Mammary epithelial cell (primary cell): ENCODE measurements at regions of chr17 and their contacts with region 1.

Region 1: DNA sequence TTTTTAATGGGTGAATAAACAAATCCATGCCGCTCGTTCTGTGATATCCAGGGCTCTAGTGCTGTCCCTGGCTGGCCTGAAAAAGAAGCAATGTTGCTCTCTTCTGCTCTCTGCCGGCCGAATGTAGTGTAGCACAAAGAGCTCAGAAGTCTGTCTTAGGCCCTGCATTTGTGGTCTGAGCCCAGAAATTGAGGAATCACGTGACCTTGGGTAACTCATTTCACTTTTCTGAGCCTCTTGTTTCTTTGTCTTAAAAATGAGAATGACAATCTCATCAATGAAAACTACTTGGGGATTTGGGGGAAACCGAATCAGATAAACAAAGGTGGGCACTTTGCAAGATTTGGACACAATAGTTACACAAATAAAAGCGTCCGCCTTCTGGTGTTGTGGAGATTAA is 381.6 kb upstream of the ASIC2 start:
- DNase-seq: peak; percentile 46
- H3K4me3 ChIP-seq: no peak overlapping the region
- H3K27ac ChIP-seq: no peak overlapping the region
- H3K4me1 ChIP-seq: no peaks in the 10 kb centered on the region
- H3K27me3 ChIP-seq: no peaks in the 10 kb centered on the region
- CTCF ChIP-seq: peak; percentile 69 to 78

Region 2: GRCh38 chr17:33016920-33017319 is 657.8 kb before region 1 on chr17:
- CTCF ChIA-PET with region 1: no interaction called
- dilution Hi-C with region 1: no loop called
- in situ Hi-C with region 1: no loop called
- intact Hi-C with region 1: loop called (anchors 1 kb)
- DNase-seq: peak; percentile 54
- H3K4me3 ChIP-seq: no peak overlapping the region
- H3K27ac ChIP-seq: no peak overlapping the region
- H3K4me1 ChIP-seq: peaks cover 45% of the 10 kb centered on the region
- H3K27me3 ChIP-seq: no peaks in the 10 kb centered on the region
- CTCF ChIP-seq: peak in 1 of 2 donors; percentile 36

Region 3: DNA sequence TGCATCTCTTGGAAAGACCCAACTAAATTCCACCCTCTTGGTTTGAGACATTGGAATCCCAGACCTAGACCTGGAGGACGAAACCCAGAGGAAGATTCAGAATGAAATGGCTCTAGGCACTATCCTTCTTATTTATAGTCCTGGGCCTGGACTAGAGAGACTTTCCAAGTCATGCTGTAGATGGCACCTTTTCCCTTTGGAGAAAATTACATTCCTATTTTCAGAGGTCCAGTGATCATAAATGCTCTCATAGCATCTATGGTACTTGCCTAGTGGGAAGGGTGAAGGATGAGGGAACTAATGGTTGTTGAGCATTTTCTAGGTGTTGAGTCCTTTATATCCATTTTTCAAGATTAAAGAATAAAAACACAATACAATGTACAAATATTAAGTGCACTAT is 645.9 kb before region 1 on chr17:
- CTCF ChIA-PET with region 1: no interaction called
- dilution Hi-C with region 1: no loop called
- in situ Hi-C with region 1: loop called in 1 of 2 experiments (anchors 10 kb)
- intact Hi-C with region 1: loop called (anchors 1 kb)
- DNase-seq: no peak
- H3K4me3 ChIP-seq: no peak overlapping the region
- H3K27ac ChIP-seq: no peak overlapping the region
- H3K4me1 ChIP-seq: no peaks in the 10 kb centered on the region
- H3K27me3 ChIP-seq: no peaks in the 10 kb centered on the region
- CTCF ChIP-seq: peak in 1 of 2 donors; percentile 39

Region 4: GRCh38 chr17:33292184-33292980 is 382.3 kb before region 1 on chr17:
- CTCF ChIA-PET with region 1: no interaction called
- dilution Hi-C with region 1: no loop called
- in situ Hi-C with region 1: no loop called
- intact Hi-C with region 1: loop called (anchors 5 kb)
- DNase-seq: peak; percentile 50
- H3K4me3 ChIP-seq: peak overlapping the region; percentile 36 to 52 (median 36)
- H3K27ac ChIP-seq: no peak overlapping the region
- H3K4me1 ChIP-seq: peaks cover 18% of the 10 kb centered on the region
- H3K27me3 ChIP-seq: peaks cover 3% of the 10 kb centered on the region
- CTCF ChIP-seq: peak; percentile 9 to 43

Region 5: GRCh38 chr17:33712120-33712519 is 37.4 kb after region 1 on chr17:
- CTCF ChIA-PET with region 1: no interaction called
- dilution Hi-C with region 1: no loop called
- in situ Hi-C with region 1: no loop called
- intact Hi-C with region 1: no loop called
- DNase-seq: no peak
- H3K4me3 ChIP-seq: no peak overlapping the region
- H3K27ac ChIP-seq: no peak overlapping the region
- H3K4me1 ChIP-seq: no peaks in the 10 kb centered on the region
- H3K27me3 ChIP-seq: no peaks in the 10 kb centered on the region
- CTCF ChIP-seq: no peak

Region 6: DNA sequence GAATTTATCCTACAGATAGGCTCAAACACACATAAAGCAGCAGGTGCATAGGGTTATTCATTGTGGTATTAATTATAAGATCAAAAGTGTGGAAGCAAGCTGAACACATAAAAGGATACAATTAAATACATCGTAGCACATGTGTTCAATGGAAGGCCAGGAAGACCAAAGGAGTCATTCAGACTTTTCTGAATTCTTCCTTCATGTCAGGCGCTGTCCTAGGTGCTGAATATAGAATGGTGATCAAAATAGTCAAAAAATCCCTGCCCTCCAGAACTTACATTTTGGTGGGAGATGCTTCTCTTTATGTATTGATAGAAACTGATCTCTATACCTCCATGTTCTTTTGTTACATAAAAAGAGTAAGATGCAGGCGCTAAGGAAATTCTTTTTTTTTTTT is 57.4 kb after region 1 on chr17:
- CTCF ChIA-PET with region 1: no interaction called
- dilution Hi-C with region 1: no loop called
- in situ Hi-C with region 1: no loop called
- intact Hi-C with region 1: no loop called
- DNase-seq: no peak
- H3K4me3 ChIP-seq: no peak overlapping the region
- H3K27ac ChIP-seq: no peak overlapping the region
- H3K4me1 ChIP-seq: no peaks in the 10 kb centered on the region
- H3K27me3 ChIP-seq: no peaks in the 10 kb centered on the region
- CTCF ChIP-seq: no peak

Region 7: DNA sequence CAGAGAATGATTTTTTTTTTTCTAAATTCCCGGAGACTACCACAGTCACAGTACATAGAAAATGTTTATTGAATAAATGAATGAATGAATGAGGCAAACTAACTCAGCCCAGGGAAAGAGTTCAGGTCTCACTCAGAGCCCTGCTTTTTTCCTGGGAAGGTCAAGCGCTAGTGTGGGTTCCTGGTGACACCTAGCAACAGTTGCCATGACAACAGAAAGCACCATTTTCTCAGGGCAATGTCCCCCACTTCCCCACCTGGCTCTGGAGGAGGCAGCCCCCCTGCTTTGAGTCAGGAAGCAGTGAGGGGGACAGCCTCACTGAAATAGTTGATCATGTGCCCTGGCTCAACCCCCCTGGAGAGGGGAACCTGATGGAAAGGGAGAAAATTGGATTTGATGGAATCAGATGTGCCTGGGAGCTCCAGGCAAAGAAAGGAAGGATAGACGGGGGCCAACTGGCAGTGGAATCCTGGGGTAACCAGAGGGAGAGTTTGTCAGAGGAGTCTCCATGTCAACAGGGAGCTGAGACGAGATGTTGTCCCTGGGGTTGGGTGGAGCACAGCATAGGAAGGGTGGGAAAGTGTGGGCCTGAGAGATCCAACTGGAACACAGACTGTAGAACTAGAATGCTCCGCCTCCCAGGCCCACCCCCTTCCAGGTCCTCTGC is 338.2 kb after region 1 on chr17:
- CTCF ChIA-PET with region 1: no interaction called
- dilution Hi-C with region 1: no loop called
- in situ Hi-C with region 1: no loop called
- intact Hi-C with region 1: no loop called
- DNase-seq: no peak
- H3K4me3 ChIP-seq: no peak overlapping the region
- H3K27ac ChIP-seq: no peak overlapping the region
- H3K4me1 ChIP-seq: no peaks in the 10 kb centered on the region
- H3K27me3 ChIP-seq: no peaks in the 10 kb centered on the region
- CTCF ChIP-seq: no peak